Mammary epithelial cell (primary cell): ENCODE measurements at regions of chr5 and their contacts with region 1.

Region 1: GRCh38 chr5:64074533-64074932 is 91.1 kb upstream of the RNF180 start:
- DNase-seq: peak; percentile 31
- H3K4me3 ChIP-seq: no peak overlapping the region
- H3K27ac ChIP-seq: no peak overlapping the region
- H3K4me1 ChIP-seq: no peaks in the 10 kb centered on the region
- H3K27me3 ChIP-seq: no peaks in the 10 kb centered on the region
- CTCF ChIP-seq: peak; percentile 63 to 76

Region 2: DNA sequence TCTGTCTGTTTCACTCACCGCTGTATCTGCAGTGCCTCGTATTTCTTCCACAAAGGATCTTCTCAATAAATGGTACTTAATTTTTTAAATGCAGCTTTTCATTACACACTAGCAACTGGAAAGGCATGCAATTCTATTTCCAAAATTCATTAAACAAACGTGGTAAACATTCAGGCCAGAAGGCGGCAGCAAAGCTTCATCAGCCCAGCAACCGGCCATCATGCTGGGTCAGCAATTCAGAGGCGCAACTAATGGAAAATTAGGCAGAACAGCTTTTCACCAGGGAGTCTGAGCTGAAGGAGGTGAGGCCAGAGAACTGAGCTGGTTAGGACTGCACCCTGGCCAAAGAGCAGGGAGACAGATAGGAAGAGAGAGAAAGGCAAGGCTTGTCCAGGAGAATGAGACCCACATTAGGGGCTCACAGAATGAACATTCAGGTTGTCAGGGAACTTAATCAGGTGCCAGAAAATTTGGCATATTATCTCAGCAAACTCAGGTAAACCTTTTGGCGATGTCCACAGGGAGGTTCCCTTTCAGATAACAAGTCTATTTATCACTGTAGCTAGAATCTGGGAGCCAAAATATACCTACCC is 73.4 kb after region 1 on chr5:
- CTCF ChIA-PET with region 1: no interaction called
- dilution Hi-C with region 1: no loop called
- in situ Hi-C with region 1: no loop called
- intact Hi-C with region 1: loop called (anchors 2 kb)
- DNase-seq: peak; percentile 28
- H3K4me3 ChIP-seq: no peak overlapping the region
- H3K27ac ChIP-seq: no peak overlapping the region
- H3K4me1 ChIP-seq: peaks cover 10% of the 10 kb centered on the region
- H3K27me3 ChIP-seq: no peaks in the 10 kb centered on the region
- CTCF ChIP-seq: peak; percentile 77 to 84

Region 3: DNA sequence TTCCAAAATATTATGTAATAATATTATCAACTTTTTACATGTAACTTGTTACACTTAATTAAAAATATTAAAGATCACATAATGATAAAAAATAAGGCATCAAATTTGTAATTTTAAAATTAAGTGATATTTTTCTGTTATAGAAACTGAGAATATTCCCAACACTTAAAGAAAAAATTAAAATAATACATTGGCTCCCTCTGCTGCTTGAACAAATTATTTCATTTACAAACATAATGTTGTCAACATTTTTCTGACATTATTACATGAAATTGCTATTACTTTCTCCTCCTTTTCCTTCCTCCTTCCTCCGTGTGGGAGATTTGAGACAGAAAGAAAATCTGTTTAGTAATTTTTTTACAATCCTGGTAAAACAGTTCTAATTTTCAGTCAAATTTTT is 133.4 kb after region 1 on chr5:
- CTCF ChIA-PET with region 1: no interaction called
- dilution Hi-C with region 1: no loop called
- in situ Hi-C with region 1: loop called (anchors 5 to 10 kb)
- intact Hi-C with region 1: loop called (anchors 1 kb)
- DNase-seq: peak; percentile 11
- H3K4me3 ChIP-seq: no peak overlapping the region
- H3K27ac ChIP-seq: no peak overlapping the region
- H3K4me1 ChIP-seq: peaks cover 11% of the 10 kb centered on the region
- H3K27me3 ChIP-seq: no peaks in the 10 kb centered on the region
- CTCF ChIP-seq: peak in 1 of 2 donors; percentile 24

Region 4: GRCh38 chr5:64612344-64612961 is 537.9 kb after region 1 on chr5:
- CTCF ChIA-PET with region 1: interaction called, 5 read pairs
- dilution Hi-C with region 1: no loop called
- in situ Hi-C with region 1: no loop called
- intact Hi-C with region 1: loop called (anchors 1 kb)
- DNase-seq: peak; percentile 56
- H3K4me3 ChIP-seq: no peak overlapping the region
- H3K27ac ChIP-seq: no peak overlapping the region
- H3K4me1 ChIP-seq: no peaks in the 10 kb centered on the region
- H3K27me3 ChIP-seq: peaks cover 6% of the 10 kb centered on the region
- CTCF ChIP-seq: peak; percentile 69 to 87